ENCODE measurements at regions of chr2 and their contacts with region 1.

Region 1: DNA sequence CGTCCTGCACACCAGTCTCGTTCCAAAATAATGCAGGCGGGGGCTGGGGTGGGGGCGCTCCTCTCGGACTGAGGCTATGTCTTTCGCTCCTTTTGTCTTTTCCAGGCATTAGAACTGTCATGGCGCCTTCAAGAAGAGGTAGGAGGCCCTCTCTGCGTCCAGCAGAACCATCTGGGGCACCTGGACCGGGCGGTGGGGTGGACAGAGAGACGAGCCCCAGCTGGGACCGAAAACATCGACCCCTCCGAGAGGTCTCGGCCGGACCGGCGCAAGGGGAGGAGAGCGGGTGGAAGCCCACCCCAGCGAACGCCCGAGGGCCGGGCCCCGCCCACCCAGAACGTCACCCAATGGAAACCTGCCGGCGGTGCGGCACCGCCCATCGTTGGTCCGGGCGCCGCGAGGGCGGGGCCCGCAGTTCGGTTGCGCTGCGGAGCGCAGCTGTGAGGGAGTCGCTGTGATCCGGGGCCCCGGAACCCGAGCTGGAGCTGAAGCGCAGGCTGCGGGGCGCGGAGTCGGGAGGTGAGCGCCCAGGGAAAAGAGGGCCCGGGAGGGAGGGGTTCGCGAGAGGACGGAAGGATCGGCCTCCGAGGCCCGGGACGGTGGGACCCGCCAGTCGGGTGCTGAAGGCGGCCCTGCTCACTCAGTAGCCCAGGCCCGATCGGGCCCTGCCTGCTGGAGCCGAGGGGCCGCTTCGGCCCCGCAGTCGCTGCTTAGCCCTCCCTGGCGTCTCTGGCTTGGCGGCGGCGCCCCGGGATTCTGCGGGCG is at the start of gene NRBP1:
- DNase-seq: peak; percentile 94
- H3K4me3 ChIP-seq: peak within 1 kb of the TSS; percentile 64
- H3K27ac ChIP-seq: peak within 1 kb of the TSS; percentile 85
- H3K4me1 ChIP-seq: peaks cover 8% of the 10 kb centered on the region
- H3K27me3 ChIP-seq: no peaks in the 10 kb centered on the region
- CTCF ChIP-seq: no peak; the same call in 1 of the 2 replicates
- total RNA-seq, gene NRBP1: 86.3 and 93.0 TPM in 2 replicates

Region 2: GRCh38 chr2:27489498-27490397 is 61.4 kb after region 1 on chr2 and contains the start of gene IFT172:
- CTCF ChIA-PET with region 1: no interaction called
- POLR2A ChIA-PET with region 1: no interaction called
- intact Hi-C with region 1: loop called (anchors 2 kb)
- DNase-seq: peak; percentile 100
- H3K4me3 ChIP-seq: peak within 1 kb of the TSS; percentile 75
- H3K27ac ChIP-seq: peak within 1 kb of the TSS; percentile 60
- H3K4me1 ChIP-seq: no peaks in the 10 kb centered on the region
- H3K27me3 ChIP-seq: no peaks in the 10 kb centered on the region
- CTCF ChIP-seq: no peak
- total RNA-seq, gene IFT172: 42.2 and 50.4 TPM in 2 replicates

Region 3: DNA sequence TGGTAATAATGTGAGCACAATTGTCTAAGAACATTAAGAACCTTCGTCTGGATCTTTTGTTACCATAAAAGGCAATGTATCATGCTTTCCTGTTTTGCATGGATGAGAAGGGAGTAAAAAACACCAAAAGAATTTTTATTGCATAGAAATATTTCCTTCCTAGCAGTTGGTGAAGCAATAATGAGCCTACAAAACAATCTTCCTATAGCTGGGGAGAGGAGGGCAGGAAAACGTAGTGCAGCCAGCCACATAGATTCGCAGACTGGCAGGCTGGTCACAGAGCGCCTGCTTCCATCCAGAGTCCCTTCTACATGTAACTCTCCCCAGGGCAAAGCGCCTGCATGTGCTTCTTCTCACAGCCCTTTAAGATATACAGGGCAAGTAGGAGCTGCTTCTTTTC is 652.5 kb after region 1 on chr2:
- CTCF ChIA-PET with region 1: no interaction called
- POLR2A ChIA-PET with region 1: no interaction called
- intact Hi-C with region 1: no loop called
- DNase-seq: peak; percentile 56
- H3K4me3 ChIP-seq: no peak overlapping the region
- H3K27ac ChIP-seq: peak overlapping the region; percentile 69
- H3K4me1 ChIP-seq: peaks cover 14% of the 10 kb centered on the region
- H3K27me3 ChIP-seq: no peaks in the 10 kb centered on the region
- CTCF ChIP-seq: no peak

Measured in A673 (cell line).